ENCODE measurements at regions of chr3 and their contacts with region 1.

Region 1: DNA sequence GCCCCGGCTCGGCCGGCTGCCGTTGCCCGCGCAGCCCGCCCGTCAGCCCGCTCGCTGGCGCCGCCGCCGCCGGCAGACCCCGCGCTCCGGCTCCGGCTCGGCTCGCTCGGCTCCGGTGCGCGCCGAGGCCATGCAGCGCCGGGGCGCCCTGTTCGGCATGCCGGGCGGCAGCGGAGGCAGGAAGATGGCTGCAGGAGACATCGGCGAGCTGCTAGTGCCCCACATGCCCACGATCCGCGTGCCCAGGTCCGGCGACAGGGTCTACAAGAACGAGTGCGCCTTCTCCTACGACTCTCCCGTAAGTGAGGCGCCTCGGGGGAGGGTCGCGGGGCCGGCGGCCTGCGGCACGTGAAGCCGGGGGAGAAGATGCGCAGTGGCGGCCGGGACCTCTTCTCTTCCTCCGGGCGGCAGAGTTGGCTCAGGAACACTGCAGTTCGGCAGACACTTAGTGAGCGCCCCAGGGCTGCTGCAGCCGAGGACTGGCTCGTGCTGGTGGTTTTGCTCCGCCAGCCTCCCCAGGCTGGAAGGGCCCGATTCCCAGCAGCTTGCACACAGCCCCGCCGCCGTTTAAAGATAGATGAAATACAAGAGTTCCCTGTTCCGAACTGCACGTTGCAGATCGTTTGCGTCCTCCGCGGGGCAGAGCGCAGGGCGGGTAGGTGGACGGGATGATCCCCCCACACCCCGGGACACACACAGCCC is 407 bp downstream of the USP13 start:
- DNase-seq: peak; percentile 76
- ATAC-seq: peak; percentile 70
- H3K4me3 Mint-ChIP-seq: peak overlapping the region; percentile 95
- H3K27ac Mint-ChIP-seq: peak overlapping the region; percentile 84
- H3K4me1 Mint-ChIP-seq: peaks cover 31% of the 10 kb centered on the region
- H3K27me3 Mint-ChIP-seq: peaks cover 9% of the 10 kb centered on the region

Region 2: GRCh38 chr3:179473565-179473964 is 179.7 kb before region 1 on chr3:
- CTCF ChIA-PET with region 1: no interaction called
- DNase-seq: no peak
- ATAC-seq: no peak
- H3K4me3 Mint-ChIP-seq: no peak overlapping the region
- H3K27ac Mint-ChIP-seq: no peak overlapping the region
- H3K4me1 Mint-ChIP-seq: no peaks in the 10 kb centered on the region
- H3K27me3 Mint-ChIP-seq: no peaks in the 10 kb centered on the region

Region 3: DNA sequence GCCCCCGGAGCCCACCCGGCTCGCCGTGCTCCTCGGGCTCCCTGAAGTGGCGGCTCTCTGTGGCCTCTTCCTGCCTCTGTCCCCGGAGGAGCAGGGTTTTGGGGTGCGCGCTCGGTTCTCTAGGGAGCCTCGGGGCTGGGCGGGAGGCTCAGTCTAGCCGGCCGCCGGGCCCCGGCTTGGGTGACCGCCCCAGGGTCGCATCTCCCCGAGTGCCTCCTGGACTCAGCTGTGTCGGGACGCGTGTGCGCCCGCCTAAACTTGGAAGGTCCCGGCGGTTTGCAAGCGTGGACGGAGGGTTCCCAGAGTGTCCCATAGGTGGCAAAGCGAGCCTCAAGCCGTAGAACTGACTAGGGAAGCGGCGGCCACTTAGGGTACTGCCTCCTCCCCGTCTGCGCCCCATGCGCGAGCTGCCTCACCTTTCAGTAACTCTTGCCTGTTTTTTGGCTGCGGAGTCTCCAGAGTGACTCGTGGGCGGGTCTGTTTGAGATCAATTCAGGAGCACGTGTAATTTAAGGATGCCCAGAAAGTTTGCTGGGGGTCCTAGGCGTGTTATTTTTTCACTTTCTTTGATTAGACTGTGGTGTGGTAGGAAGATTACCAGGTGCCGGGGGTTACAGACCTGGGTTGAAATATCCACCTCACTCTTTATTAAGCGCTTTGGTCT is 89.8 kb before region 1 on chr3:
- CTCF ChIA-PET with region 1: no interaction called
- DNase-seq: peak; percentile 86
- ATAC-seq: peak; percentile 59
- H3K4me3 Mint-ChIP-seq: peak overlapping the region; percentile 99
- H3K27ac Mint-ChIP-seq: peak overlapping the region; percentile 98
- H3K4me1 Mint-ChIP-seq: peaks cover 37% of the 10 kb centered on the region
- H3K27me3 Mint-ChIP-seq: peaks cover 12% of the 10 kb centered on the region

Region 4: DNA sequence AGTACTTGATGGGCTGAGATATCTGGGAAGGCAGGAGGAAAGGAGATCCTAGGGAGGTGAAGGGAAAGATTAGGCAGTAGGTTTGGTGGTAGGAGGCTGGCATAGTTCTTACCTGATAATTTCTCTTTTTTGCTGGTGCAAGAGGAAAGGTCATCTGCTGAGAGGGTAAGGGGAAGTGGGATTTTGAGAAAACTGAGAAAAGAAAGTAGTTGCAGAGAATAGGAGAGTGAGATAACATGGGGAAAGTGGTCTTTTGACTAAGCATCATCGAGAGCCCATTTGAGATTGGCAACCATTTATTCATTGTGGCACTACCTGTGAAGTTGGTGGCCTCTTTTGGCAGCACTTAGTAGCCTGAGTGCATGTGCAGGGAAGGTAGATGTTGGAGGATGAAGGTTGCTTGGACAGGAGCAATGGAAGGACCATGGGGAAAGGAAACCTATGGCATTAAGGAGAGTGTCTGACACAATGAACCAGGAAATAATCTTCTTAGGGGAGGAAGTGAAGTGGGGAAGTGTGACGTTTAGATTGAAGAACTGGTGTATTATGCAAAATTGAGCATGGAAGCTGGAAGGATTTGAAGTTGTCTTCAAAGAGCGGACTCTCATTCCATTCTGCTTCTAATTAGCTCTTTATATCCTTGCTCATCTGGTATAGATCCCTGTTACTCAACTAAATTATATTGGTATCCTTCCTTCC is 22.3 kb before region 1 on chr3:
- CTCF ChIA-PET with region 1: interaction called, 13 read pairs
- DNase-seq: no peak
- ATAC-seq: no peak
- H3K4me3 Mint-ChIP-seq: no peak overlapping the region
- H3K27ac Mint-ChIP-seq: no peak overlapping the region
- H3K4me1 Mint-ChIP-seq: no peaks in the 10 kb centered on the region
- H3K27me3 Mint-ChIP-seq: no peaks in the 10 kb centered on the region